ENCODE measurements at regions of chr3 and their contacts with region 1.

Region 1: GRCh38 chr3:167705840-167706239 is 28.9 kb downstream of the PDCD10 start:
- DNase-seq: no peak
- CTCF ChIP-seq: no peak

Region 2: GRCh38 chr3:167684388-167684993 is 21.3 kb before region 1 on chr3:
- CTCF ChIA-PET with region 1: interaction called, 11 read pairs
- POLR2A ChIA-PET with region 1: no interaction called
- DNase-seq: peak; percentile 36
- CTCF ChIP-seq: peak; percentile 61

Region 3: DNA sequence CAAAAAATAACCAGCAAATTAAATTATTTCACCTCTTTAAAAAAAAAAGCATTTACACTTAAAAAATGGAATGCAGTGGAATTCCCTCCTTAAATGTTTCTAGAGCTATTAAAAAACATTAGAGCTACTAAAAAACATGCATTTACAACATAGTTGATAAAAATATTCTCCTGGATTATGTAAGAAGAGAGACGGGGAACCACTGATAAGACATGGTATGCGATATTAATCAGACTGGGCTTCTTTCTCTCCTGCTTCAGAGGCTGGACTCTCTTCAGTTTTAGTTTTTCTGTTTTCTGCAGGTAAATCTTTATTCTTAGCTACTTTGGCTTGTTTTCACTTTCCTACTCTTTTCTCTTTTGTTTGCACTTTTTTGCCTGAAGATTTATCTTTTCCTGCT is 11.7 kb before region 1 on chr3:
- CTCF ChIA-PET with region 1: interaction called, 11 read pairs
- POLR2A ChIA-PET with region 1: no interaction called
- DNase-seq: no peak
- CTCF ChIP-seq: no peak

Region 4: GRCh38 chr3:167899093-167899492 is 193.3 kb after region 1 on chr3:
- CTCF ChIA-PET with region 1: no interaction called
- POLR2A ChIA-PET with region 1: no interaction called
- DNase-seq: no peak
- CTCF ChIP-seq: no peak